GM12878 (cell line): ENCODE measurements at regions of chr12 and their contacts with region 1.

Region 1: GRCh38 chr12:104456417-104456949 is at the start of gene CHST11:
- DNase-seq: no peak
- ATAC-seq: peak; percentile 76
- H3K4me3 ChIP-seq: peak within 1 kb of the TSS; percentile 100
- H3K27ac ChIP-seq: peak within 1 kb of the TSS; percentile 95
- H3K4me1 ChIP-seq: peaks cover 7% of the 10 kb centered on the region; the same call in 1 of the 2 replicates
- H3K27me3 ChIP-seq: no peaks in the 10 kb centered on the region
- CTCF ChIP-seq: peak; percentile 11 to 21 (median 15); a peak in 2 of 6 replicates
- EP300 ChIP-seq: peak; percentile 38 to 57; a peak in 1 of 4 replicates
- POLR2A ChIP-seq: no peak
- RAD21 ChIP-seq: peak; percentile 20; the same call in 1 of the 2 replicates
- polyA plus RNA-seq, gene CHST11: 1.9 to 2.5 TPM

Region 2: GRCh38 chr12:104339663-104340062 is 116.8 kb before region 1 on chr12:
- CTCF ChIA-PET with region 1: no interaction called
- POLR2A ChIA-PET with region 1: no interaction called
- RAD21 ChIA-PET with region 1: no interaction called
- SMC1A ChIA-PET with region 1: no interaction called
- in situ Hi-C with region 1: no loop called
- intact Hi-C with region 1: no loop called
- DNase-seq: no peak
- ATAC-seq: no peak
- H3K4me3 ChIP-seq: no peak overlapping the region
- H3K27ac ChIP-seq: no peak overlapping the region
- H3K4me1 ChIP-seq: no peaks in the 10 kb centered on the region
- H3K27me3 ChIP-seq: no peaks in the 10 kb centered on the region
- CTCF ChIP-seq: no peak
- EP300 ChIP-seq: no peak
- POLR2A ChIP-seq: no peak
- RAD21 ChIP-seq: no peak

Region 3: GRCh38 chr12:104369708-104370107 is 86.8 kb before region 1 on chr12:
- CTCF ChIA-PET with region 1: no interaction called
- POLR2A ChIA-PET with region 1: no interaction called
- RAD21 ChIA-PET with region 1: no interaction called
- SMC1A ChIA-PET with region 1: no interaction called
- in situ Hi-C with region 1: no loop called
- intact Hi-C with region 1: no loop called
- DNase-seq: no peak
- ATAC-seq: no peak
- H3K4me3 ChIP-seq: no peak overlapping the region
- H3K27ac ChIP-seq: no peak overlapping the region
- H3K4me1 ChIP-seq: no peaks in the 10 kb centered on the region
- H3K27me3 ChIP-seq: no peaks in the 10 kb centered on the region
- CTCF ChIP-seq: no peak
- EP300 ChIP-seq: no peak
- POLR2A ChIP-seq: no peak
- RAD21 ChIP-seq: no peak

Region 4: DNA sequence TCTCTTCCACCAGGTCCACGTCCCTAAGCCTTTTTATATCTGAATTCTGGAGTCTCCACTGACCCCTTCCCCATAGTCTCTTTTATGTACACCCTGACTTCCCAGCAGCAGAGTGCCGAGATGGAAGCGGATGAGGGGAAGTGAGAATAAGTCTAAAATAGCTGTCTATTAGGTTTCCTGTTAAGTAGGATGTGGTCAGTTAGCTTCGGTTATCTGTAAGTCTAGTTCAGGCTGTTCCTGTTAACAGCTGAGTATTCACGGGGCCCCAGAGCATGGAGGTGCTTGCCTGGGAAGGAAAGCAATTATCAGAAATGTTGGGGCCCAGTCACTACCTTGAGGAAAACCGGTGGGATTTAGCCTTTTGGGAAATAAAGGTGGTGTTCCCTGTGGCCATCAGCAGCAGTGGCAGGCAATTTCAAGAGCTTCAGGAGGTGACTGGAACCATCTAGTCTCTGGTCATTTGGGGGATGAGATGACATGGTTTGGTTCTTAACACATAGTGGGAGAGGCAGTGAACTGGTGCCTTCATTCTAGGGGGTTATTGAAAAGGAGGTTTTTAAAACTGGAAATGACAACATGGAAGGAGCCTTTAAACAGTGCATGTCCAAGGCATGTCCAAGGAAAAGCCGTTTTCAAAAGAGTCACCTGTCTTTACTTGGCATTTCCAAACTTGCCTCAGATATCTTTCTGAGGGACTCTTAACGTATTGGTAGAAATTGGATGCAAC is 22.1 kb after region 1 on chr12:
- CTCF ChIA-PET with region 1: interaction called, 16 read pairs
- POLR2A ChIA-PET with region 1: interaction called, 64 read pairs
- RAD21 ChIA-PET with region 1: interaction called, 90 read pairs
- SMC1A ChIA-PET with region 1: interaction called, 73 read pairs
- in situ Hi-C with region 1: no loop called
- intact Hi-C with region 1: no loop called
- DNase-seq: peak; percentile 80
- ATAC-seq: peak; percentile 88
- H3K4me3 ChIP-seq: peak overlapping the region; percentile 73
- H3K27ac ChIP-seq: peak overlapping the region; percentile 94
- H3K4me1 ChIP-seq: peaks cover 37% of the 10 kb centered on the region
- H3K27me3 ChIP-seq: no peaks in the 10 kb centered on the region
- CTCF ChIP-seq: no peak
- EP300 ChIP-seq: peak; percentile 17 to 81; a peak in 2 of 4 replicates
- POLR2A ChIP-seq: peak; percentile 65
- RAD21 ChIP-seq: peak; percentile 21; the same call in 1 of the 2 replicates

Region 5: GRCh38 chr12:104494137-104494792 is 37.8 kb after region 1 on chr12:
- CTCF ChIA-PET with region 1: interaction called, 8 read pairs
- POLR2A ChIA-PET with region 1: interaction called, 7 read pairs
- RAD21 ChIA-PET with region 1: interaction called, 47 read pairs
- SMC1A ChIA-PET with region 1: interaction called, 51 read pairs
- in situ Hi-C with region 1: no loop called
- intact Hi-C with region 1: loop called (anchors 1 kb)
- DNase-seq: peak; percentile 57
- ATAC-seq: peak; percentile 77
- H3K4me3 ChIP-seq: peak overlapping the region; percentile 57
- H3K27ac ChIP-seq: peak overlapping the region; percentile 83
- H3K4me1 ChIP-seq: peaks cover 52% of the 10 kb centered on the region
- H3K27me3 ChIP-seq: no peaks in the 10 kb centered on the region
- CTCF ChIP-seq: no peak
- EP300 ChIP-seq: peak in 1 of 2 experiments; percentile 16; a peak in 1 of 4 replicates
- POLR2A ChIP-seq: peak; percentile 50
- RAD21 ChIP-seq: no peak

Region 6: GRCh38 chr12:104520242-104520900 is 63.9 kb after region 1 on chr12:
- CTCF ChIA-PET with region 1: interaction called, 4 read pairs
- POLR2A ChIA-PET with region 1: interaction called, 3 read pairs
- RAD21 ChIA-PET with region 1: interaction called, 16 read pairs
- SMC1A ChIA-PET with region 1: interaction called, 23 read pairs
- in situ Hi-C with region 1: no loop called
- intact Hi-C with region 1: no loop called
- DNase-seq: peak; percentile 75
- ATAC-seq: peak; percentile 79
- H3K4me3 ChIP-seq: no peak overlapping the region
- H3K27ac ChIP-seq: peak overlapping the region; percentile 60
- H3K4me1 ChIP-seq: peaks cover 49% of the 10 kb centered on the region
- H3K27me3 ChIP-seq: no peaks in the 10 kb centered on the region
- CTCF ChIP-seq: no peak
- EP300 ChIP-seq: peak; percentile 31 to 50; a peak in 1 of 4 replicates
- POLR2A ChIP-seq: no peak
- RAD21 ChIP-seq: no peak

Region 7: DNA sequence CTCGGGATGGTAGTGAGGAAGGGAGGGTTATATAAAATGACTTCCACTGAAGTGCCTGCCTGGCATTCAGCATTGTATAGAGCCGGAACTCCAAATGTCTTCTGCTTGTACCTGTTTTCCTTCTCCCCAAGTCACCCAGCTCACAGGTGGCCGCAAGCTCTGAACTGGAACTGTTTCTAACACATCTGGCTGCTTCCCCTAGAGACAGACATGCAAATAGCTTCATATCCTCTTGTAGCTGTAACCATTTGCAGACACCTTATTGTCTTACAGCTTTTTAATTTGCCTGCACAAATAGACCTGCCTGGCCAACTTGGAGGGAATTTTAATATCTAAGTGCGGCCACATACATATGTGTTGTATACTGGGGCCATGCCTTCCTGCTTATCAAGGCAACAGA is 126.3 kb after region 1 on chr12:
- CTCF ChIA-PET with region 1: interaction called, 6 read pairs
- POLR2A ChIA-PET with region 1: interaction called, 14 read pairs
- RAD21 ChIA-PET with region 1: interaction called, 32 read pairs
- SMC1A ChIA-PET with region 1: interaction called, 44 read pairs
- in situ Hi-C with region 1: no loop called
- intact Hi-C with region 1: loop called (anchors 2 kb)
- DNase-seq: peak; percentile 76
- ATAC-seq: peak; percentile 90
- H3K4me3 ChIP-seq: peak overlapping the region; percentile 37; the same call in 1 of the 2 replicates
- H3K27ac ChIP-seq: peak overlapping the region; percentile 47
- H3K4me1 ChIP-seq: peaks cover 69% of the 10 kb centered on the region
- H3K27me3 ChIP-seq: no peaks in the 10 kb centered on the region
- CTCF ChIP-seq: no peak
- EP300 ChIP-seq: peak; percentile 35 to 79; a peak in 3 of 4 replicates
- POLR2A ChIP-seq: no peak
- RAD21 ChIP-seq: no peak

Region 8: DNA sequence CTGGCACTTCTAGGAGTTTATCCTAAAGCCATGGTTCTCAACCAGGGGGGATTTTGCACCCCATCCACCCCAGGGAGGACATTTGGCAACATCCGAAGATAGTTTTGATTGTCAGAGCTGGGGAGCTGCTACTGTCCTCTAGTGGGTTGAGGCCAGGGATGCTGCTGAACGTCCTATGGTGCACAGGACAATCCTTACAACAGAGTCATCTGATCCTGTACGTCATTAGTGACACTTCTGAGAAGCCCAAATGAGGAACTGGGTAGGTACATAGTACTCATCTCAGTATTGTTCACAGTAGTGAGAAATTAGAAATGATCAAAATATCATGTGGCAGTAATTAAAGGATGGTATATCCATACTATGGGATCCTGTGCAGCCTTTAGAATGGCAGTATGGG is 185.4 kb after region 1 on chr12:
- CTCF ChIA-PET with region 1: no interaction called
- POLR2A ChIA-PET with region 1: no interaction called
- RAD21 ChIA-PET with region 1: interaction called, 12 read pairs
- SMC1A ChIA-PET with region 1: interaction called, 6 read pairs
- in situ Hi-C with region 1: no loop called
- intact Hi-C with region 1: loop called (anchors 1 kb)
- DNase-seq: peak; percentile 79
- ATAC-seq: peak; percentile 92
- H3K4me3 ChIP-seq: no peak overlapping the region
- H3K27ac ChIP-seq: peak overlapping the region; percentile 78
- H3K4me1 ChIP-seq: peaks cover 43% of the 10 kb centered on the region
- H3K27me3 ChIP-seq: no peaks in the 10 kb centered on the region
- CTCF ChIP-seq: peak; percentile 37 to 65 (median 50); a peak in 5 of 6 replicates
- EP300 ChIP-seq: peak; percentile 99
- POLR2A ChIP-seq: no peak
- RAD21 ChIP-seq: peak; percentile 65